Lower leg skin (tissue), 4 donors: ENCODE measurements at regions of chr5 and their contacts with region 1.

Region 1: GRCh38 chr5:54517174-54518092 is at the start of gene SNX18:
- DNase-seq: peak; percentile 89 to 98
- H3K4me3 ChIP-seq: peak within 1 kb of the TSS; percentile 86
- CTCF ChIP-seq: peak in 1 of 3 donors; percentile 62
- POLR2A ChIP-seq: no peak
- total RNA-seq, gene SNX18: 38.5 to 59.6 (median 51.2) TPM

Region 2: GRCh38 chr5:54492178-54492577 is 25.3 kb before region 1 on chr5:
- intact Hi-C with region 1: no loop called
- DNase-seq: no peak
- H3K4me3 ChIP-seq: no peak overlapping the region
- CTCF ChIP-seq: no peak
- POLR2A ChIP-seq: no peak

Region 3: GRCh38 chr5:54743997-54744788 is 226.8 kb after region 1 on chr5:
- intact Hi-C with region 1: loop called (anchors 10 kb)
- DNase-seq: peak in 1 of 2 donors; percentile 44
- H3K4me3 ChIP-seq: no peak overlapping the region
- CTCF ChIP-seq: no peak
- POLR2A ChIP-seq: no peak

Region 4: DNA sequence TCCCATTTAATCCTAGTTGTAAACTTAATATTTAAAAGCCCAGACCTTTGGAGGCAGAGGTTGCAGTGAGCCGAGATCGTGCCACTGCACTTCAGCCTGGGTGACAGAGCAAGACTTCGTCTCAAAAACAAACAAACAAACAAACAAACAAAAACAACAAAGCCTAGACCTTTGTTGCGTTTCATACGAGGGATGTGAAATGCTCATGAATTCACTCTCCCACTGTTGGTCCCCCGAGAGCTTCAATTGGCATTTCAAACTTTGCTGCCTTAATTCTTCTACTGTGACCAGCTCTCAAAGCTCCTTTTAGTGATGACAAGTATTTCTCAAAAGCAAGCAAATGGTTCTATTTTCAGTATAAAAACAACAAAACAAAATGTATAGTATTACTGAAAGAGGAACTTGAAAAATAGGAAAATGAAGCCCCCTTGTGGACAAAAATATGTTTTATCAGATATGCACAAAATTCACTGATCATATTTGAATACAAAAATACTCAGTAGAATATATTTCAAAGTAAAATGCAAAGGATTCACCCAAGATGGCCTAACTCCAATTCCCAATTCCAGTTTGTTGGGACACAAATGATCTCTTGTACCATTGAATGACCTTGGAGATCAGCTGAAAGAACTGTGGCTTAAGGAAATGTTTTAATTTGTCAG is 327.6 kb after region 1 on chr5:
- intact Hi-C with region 1: loop called (anchors 5 kb)
- DNase-seq: no peak
- H3K4me3 ChIP-seq: no peak overlapping the region
- CTCF ChIP-seq: peak in 1 of 3 donors; percentile 59
- POLR2A ChIP-seq: no peak

Region 5: DNA sequence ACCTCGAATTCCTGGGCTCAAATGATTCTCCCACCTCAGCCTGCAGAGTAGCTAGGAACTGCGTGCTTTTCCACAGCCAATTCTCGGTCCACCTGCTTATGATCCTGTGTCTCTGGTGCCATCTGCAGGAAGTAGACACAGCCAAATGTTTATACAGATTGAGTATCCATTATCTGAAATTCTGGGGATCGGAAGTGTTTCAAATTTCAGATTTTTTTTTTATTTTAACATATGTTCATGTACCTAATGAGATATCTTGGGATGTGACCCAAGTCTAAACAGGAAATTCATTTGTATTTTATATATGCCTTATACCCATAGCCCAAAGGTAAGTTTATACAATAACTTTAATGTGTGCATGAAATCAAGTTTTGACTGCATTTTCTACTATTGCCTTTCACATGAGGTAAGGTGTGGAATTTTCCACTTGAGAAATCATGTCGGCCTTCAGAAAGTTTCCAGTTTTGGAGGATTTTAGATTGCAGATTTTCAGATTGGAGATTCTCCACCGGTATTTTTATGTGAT is 378.4 kb after region 1 on chr5:
- intact Hi-C with region 1: loop called (anchors 10 kb)
- DNase-seq: peak in 1 of 2 donors; percentile 37
- H3K4me3 ChIP-seq: no peak overlapping the region
- CTCF ChIP-seq: no peak
- POLR2A ChIP-seq: no peak

Region 6: GRCh38 chr5:55159763-55160492 is 642.5 kb after region 1 on chr5 and contains the start of gene GPX8:
- intact Hi-C with region 1: loop called (anchors 10 kb)
- DNase-seq: no peak
- H3K4me3 ChIP-seq: peak within 1 kb of the TSS; percentile 15
- CTCF ChIP-seq: no peak
- POLR2A ChIP-seq: no peak
- total RNA-seq, gene GPX8: 1.6 to 8.1 (median 4.6) TPM